Heart left ventricle (tissue), 16 donors: ENCODE measurements at regions of chr3 and their contacts with region 1.

Region 1: DNA sequence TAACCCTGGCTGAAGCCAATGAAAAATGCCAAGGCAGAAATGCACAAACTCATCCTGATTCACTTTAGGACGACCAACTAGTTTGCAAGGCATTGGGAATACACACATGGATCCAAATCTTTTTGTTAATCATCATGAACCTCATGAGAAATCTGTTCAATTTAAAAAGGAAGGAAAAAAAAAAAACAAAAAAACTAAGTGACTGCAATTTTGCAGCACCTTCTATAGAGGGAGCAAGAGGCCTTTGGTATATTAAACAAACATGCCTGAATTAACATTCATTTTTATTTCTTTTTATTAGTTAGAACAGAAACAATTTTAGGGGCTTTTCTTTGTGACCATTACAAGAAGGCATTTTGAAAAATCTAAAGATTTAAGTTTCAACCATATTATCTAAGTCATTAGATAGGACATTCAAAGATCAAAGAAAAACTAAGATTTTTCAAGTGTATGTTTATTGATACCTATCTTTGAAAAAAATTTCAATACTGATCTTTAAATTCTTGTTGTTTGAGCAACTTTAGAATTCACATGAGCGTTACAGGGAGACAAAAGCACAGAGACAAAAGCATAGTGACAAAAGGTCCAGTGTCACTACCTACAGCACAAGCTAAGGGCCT is 182.4 kb downstream of the CBLB start:
- DNase-seq: no peak
- ATAC-seq: peak in 1 of 4 donors; percentile 29
- H3K4me3 ChIP-seq: no peak overlapping the region
- H3K27ac ChIP-seq: peak overlapping the region in 1 of 12 donors; percentile 27
- H3K4me1 ChIP-seq: peaks cover 0 to 37% (median 12%) of the 10 kb centered on the region in 12 donors
- H3K27me3 ChIP-seq: no peaks in the 10 kb centered on the region
- CTCF ChIP-seq: peak; percentile 60 to 89 (median 84)
- POLR2A ChIP-seq: no peak

Region 2: GRCh38 chr3:105518806-105519418 is 167.5 kb before region 1 on chr3:
- intact Hi-C with region 1: no loop called
- DNase-seq: no peak
- ATAC-seq: peak in 3 of 4 donors; percentile 50 to 58 (median 55)
- H3K4me3 ChIP-seq: no peak overlapping the region
- H3K27ac ChIP-seq: no peak overlapping the region
- H3K4me1 ChIP-seq: no peaks in the 10 kb centered on the region
- H3K27me3 ChIP-seq: no peaks in the 10 kb centered on the region
- CTCF ChIP-seq: peak; percentile 40 to 78 (median 62)
- POLR2A ChIP-seq: no peak

Region 3: GRCh38 chr3:105656651-105657504 is 29.5 kb before region 1 on chr3:
- intact Hi-C with region 1: no loop called
- DNase-seq: no peak
- ATAC-seq: peak in 1 of 4 donors; percentile 53
- H3K4me3 ChIP-seq: no peak overlapping the region
- H3K27ac ChIP-seq: peak overlapping the region in 4 of 12 donors; percentile 11 to 47 (median 40)
- H3K4me1 ChIP-seq: peaks cover 0 to 22% (median 7%) of the 10 kb centered on the region in 12 donors
- H3K27me3 ChIP-seq: no peaks in the 10 kb centered on the region
- CTCF ChIP-seq: no peak
- POLR2A ChIP-seq: no peak

Region 4: DNA sequence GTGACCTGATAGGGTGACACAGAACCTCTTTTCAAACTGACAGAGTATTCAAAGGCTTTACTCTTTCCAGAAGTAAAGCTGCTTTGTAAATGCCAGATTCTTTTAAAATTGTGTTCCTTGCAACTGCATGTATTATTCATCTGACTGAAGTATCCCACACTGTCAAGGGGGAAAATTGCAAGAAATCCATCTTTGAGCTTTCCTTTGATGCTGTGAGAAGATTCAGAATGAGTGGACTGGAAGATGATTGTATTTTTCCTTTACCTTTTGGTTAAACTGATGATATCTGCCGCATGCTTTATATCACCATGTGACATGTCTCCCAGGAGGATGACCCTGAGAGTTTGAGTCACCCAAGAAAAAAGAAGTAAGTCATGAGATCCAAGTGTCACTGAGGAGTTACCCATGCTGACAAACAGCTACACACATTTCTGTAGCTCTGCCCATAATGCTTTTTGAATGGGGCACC is 433.3 kb after region 1 on chr3:
- intact Hi-C with region 1: loop called in 1 of 10 experiments (anchors 5 kb)
- DNase-seq: no peak
- ATAC-seq: no peak
- H3K4me3 ChIP-seq: no peak overlapping the region
- H3K27ac ChIP-seq: peak overlapping the region in 1 of 12 donors; percentile 33
- H3K4me1 ChIP-seq: peaks cover 0 to 14% (median 0%) of the 10 kb centered on the region in 12 donors
- H3K27me3 ChIP-seq: no peaks in the 10 kb centered on the region
- CTCF ChIP-seq: no peak
- POLR2A ChIP-seq: no peak

Region 5: DNA sequence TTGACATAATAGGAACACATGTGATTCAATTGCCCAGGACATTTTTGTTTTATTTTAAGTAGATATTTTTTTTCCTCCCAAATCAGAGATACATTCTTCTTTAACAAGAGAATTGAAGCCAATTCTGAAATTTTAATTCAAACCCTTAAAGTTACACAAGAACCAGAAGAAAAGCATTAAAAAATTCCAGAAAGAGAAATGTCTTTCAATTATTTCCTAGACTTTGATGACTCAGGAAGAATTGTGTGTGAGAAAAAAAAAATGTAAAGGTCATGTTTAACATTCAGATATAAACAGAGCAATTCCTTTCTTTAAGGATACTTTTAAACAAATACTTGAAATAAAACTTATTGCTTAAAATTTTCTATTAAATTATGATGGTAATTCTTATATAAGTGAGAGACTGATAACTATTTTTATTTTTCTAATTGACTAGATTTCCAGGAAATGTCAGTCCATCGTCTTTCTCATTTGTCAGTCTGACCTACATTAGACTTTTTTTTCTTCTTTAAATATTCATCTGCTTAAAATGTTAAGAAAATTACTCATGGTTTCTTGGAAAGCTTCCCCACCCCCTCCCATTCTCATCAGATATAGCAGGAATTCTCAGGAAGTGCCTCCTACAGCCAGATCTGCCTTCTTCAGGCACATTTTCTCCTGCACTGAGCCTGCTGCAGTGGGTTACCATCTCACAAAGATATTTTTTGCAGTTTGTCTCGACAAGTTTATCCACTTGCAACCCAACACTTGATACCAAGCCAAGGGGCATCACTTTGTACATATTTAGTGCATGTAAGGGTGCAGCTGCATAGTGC is 444.2 kb after region 1 on chr3:
- intact Hi-C with region 1: no loop called
- DNase-seq: no peak
- ATAC-seq: peak in 2 of 4 donors; percentile 62 to 88
- H3K4me3 ChIP-seq: no peak overlapping the region
- H3K27ac ChIP-seq: peak overlapping the region in 1 of 12 donors; percentile 17
- H3K4me1 ChIP-seq: peaks cover 0 to 33% (median 11%) of the 10 kb centered on the region in 12 donors
- H3K27me3 ChIP-seq: no peaks in the 10 kb centered on the region
- CTCF ChIP-seq: no peak
- POLR2A ChIP-seq: no peak

Region 6: DNA sequence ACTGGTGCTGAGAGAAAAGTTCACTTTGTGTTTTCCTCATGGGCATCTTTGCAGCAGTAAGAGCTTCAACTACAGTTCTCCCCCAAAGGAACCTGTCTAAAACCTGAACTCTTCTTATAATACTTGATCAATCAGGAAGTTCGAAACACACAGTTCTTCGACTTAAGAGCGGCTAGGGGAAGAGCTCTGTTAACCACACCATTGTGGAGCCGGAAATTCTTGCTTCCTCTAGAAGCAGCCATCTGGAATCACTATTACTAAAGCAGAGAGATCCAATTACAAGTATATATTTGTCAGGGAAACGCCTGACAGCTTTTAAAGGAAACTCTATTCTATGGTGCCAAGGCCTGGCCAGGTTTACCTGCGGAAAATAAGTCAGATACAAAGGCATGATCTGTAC is 519.8 kb after region 1 on chr3:
- intact Hi-C with region 1: loop called in 8 of 10 experiments (anchors 5 to 10 kb)
- DNase-seq: peak in 2 of 5 donors; percentile 15 to 23
- ATAC-seq: peak in 3 of 4 donors; percentile 62 to 91 (median 72)
- H3K4me3 ChIP-seq: peak overlapping the region in 5 of 12 donors; percentile 6 to 25 (median 17)
- H3K27ac ChIP-seq: peak overlapping the region in 8 of 12 donors; percentile 3 to 69 (median 46)
- H3K4me1 ChIP-seq: peaks cover 0 to 27% (median 5%) of the 10 kb centered on the region in 12 donors
- H3K27me3 ChIP-seq: no peaks in the 10 kb centered on the region
- CTCF ChIP-seq: no peak
- POLR2A ChIP-seq: no peak

Region 7: DNA sequence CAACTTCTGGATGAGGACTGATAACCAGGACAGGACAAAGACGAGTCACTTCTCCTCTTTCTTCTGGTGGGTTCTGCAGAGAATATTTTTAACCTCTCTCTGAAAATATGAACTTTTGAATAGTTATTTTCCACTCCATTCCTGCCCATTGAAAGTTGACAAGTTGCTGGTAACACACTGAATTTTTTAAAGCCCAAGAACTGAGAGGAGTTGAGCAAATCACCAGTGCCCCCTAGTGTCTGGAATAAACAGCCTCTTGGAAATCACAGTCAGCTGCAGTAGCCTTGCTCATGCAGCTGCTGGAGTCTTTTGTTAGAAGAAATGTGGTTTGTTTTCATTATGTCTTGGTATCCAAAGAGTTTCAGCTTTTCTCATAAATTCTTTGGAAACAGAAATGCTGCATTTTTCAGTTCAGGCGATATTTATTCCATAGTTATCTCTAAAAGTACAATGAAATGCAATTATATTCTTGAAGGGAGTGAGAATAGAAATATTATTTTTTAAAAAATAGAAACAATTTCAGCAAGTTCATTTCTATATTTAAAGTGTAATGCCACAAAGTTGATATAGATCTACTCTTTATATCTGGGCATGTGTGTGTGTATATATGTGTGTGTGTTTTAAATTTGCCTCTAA is 923.4 kb after region 1 on chr3:
- intact Hi-C with region 1: loop called (anchors 2 to 10 kb)
- DNase-seq: peak in 4 of 5 donors; percentile 27 to 64 (median 46)
- ATAC-seq: peak; percentile 37 to 85 (median 79)
- H3K4me3 ChIP-seq: no peak overlapping the region
- H3K27ac ChIP-seq: no peak overlapping the region
- H3K4me1 ChIP-seq: peaks cover 0 to 9% (median 0%) of the 10 kb centered on the region in 12 donors
- H3K27me3 ChIP-seq: no peaks in the 10 kb centered on the region
- CTCF ChIP-seq: peak; percentile 70 to 93 (median 84)
- POLR2A ChIP-seq: no peak